ENCODE measurements at regions of chr5 and their contacts with region 1.

Region 1: GRCh38 chr5:116652196-116652729 is 77.6 kb upstream of the SEMA6A start:
- DNase-seq: peak; percentile 26 to 90 (median 80)
- H3K4me3 ChIP-seq: peak overlapping the region in 42 of 59 donors; percentile 2 to 51 (median 20)
- H3K27ac ChIP-seq: peak overlapping the region; percentile 5 to 97 (median 86)
- H3K27me3 ChIP-seq: no peaks in the 10 kb centered on the region
- CTCF ChIP-seq: peak in 4 of 56 donors; percentile 6 to 16 (median 14)

Region 2: GRCh38 chr5:116668361-116668760 is 16.1 kb after region 1 on chr5:
- intact Hi-C with region 1: loop called in 1 of 2 experiments (anchors 1 kb)
- DNase-seq: no peak
- H3K4me3 ChIP-seq: no peak overlapping the region
- H3K27ac ChIP-seq: peak overlapping the region in 3 of 59 donors; percentile 65 to 81 (median 80)
- H3K27me3 ChIP-seq: peaks cover 0 to 5% (median 0%) of the 10 kb centered on the region in 45 donors
- CTCF ChIP-seq: no peak

Measured in dorsolateral prefrontal cortex (tissue), 120 donors.